Activated CD8-positive, alpha-beta T cell treated with anti-CD3 and anti-CD28 coated beads, Interleukin-2, amount 10 ng/mL, durations not matched to agents 7 days and 5 days (primary cell): ENCODE measurements at regions of chr22 and their contacts with region 1.

Region 1: GRCh38 chr22:46071451-46072109 is 78.7 kb upstream of the PPARA start:
- DNase-seq: peak; percentile 52
- ATAC-seq: peak; percentile 25
- H3K4me3 Mint-ChIP-seq: peak overlapping the region; percentile 78
- H3K27ac Mint-ChIP-seq: peak overlapping the region; percentile 80
- H3K4me1 Mint-ChIP-seq: peaks cover 42% of the 10 kb centered on the region
- H3K27me3 Mint-ChIP-seq: peaks cover 3% of the 10 kb centered on the region

Region 2: DNA sequence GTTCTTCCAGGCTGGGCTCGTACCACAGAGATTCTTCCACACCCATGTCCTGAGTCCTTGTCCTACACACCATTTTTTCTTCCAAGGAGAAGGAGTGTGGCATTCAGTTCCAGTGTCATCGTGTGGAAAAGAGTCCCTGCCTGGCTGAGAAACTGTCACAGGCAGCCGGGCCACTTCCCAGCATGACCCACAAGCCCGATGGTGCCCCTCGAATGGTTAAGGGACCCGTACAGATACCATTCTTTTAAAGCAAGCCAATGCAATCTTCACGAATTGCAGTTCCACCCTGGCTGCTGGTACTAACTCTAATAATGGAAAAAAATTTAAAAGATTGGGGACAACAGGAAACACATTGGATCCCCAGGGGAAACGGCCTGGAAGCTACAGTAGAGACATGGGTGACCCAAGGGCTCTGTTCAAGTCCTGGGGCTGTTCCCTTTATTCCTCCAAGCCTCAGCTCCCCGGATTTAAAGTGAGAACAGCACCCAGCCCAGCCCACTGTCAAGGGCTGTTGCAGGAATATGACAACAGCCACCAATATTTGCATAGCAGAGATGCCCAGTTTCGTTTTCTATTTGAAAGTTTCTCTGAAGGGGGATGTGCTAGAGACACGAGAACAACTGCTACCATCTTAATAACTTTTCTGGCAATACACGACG is 13.7 kb before region 1 on chr22:
- CTCF ChIA-PET with region 1: no interaction called
- POLR2A ChIA-PET with region 1: interaction called, 10 read pairs
- DNase-seq: peak; percentile 55
- ATAC-seq: peak; percentile 77
- H3K4me3 Mint-ChIP-seq: peak overlapping the region; percentile 54
- H3K27ac Mint-ChIP-seq: peak overlapping the region; percentile 82
- H3K4me1 Mint-ChIP-seq: peaks cover 45% of the 10 kb centered on the region
- H3K27me3 Mint-ChIP-seq: no peaks in the 10 kb centered on the region

Region 3: DNA sequence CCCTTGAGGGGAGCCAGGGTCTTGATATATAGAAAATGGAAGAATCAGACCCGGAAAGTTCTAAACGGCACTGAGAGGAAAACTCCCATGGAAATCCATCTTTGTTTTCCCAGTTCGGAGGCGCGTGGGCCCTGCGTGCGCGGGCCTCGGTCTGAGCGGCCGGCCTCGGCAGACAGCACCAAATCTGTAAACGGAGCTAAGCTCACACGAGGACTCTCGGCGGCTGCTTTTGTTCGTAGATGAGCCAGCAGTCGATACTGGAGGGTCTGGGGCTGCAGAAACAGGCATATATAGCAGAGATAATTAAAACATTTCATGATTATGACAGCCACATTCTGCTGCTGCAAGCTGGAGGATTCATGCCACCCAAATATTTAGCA is 10.2 kb after region 1 on chr22:
- CTCF ChIA-PET with region 1: no interaction called
- POLR2A ChIA-PET with region 1: no interaction called
- DNase-seq: no peak
- ATAC-seq: no peak
- H3K4me3 Mint-ChIP-seq: no peak overlapping the region
- H3K27ac Mint-ChIP-seq: no peak overlapping the region
- H3K4me1 Mint-ChIP-seq: no peaks in the 10 kb centered on the region
- H3K27me3 Mint-ChIP-seq: no peaks in the 10 kb centered on the region

Region 4: DNA sequence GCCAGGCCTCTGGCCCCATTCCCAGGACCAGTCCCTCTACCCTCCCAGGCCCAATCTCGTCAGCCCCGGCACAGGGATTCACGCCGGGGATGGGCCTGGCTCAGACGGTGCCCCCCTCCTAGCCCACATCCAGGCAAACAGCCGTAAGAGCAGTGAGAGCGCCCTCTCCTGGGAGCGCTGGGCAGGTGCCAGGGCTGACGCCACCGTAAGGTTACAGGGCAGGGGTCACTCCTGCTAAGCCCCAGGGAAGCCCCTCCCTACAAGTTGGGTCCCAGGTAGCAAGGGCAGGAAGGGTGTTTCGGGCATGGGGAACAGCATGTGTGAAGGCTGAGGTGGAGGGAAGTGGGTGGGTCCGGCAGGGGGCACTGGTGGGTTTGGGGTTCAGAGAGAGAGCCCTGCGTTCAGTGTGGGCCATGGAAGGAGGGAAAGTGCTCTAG is 59.6 kb after region 1 on chr22:
- CTCF ChIA-PET with region 1: no interaction called
- POLR2A ChIA-PET with region 1: no interaction called
- DNase-seq: no peak
- ATAC-seq: no peak
- H3K4me3 Mint-ChIP-seq: no peak overlapping the region
- H3K27ac Mint-ChIP-seq: no peak overlapping the region
- H3K4me1 Mint-ChIP-seq: no peaks in the 10 kb centered on the region
- H3K27me3 Mint-ChIP-seq: no peaks in the 10 kb centered on the region